SK-N-SH (cell line): ENCODE measurements at regions of chr3 and their contacts with region 1.

Region 1: GRCh38 chr3:196192036-196192523 is 19.1 kb downstream of the ZDHHC19 start:
- DNase-seq: peak; percentile 11
- H3K4me3 ChIP-seq: no peak overlapping the region
- H3K27ac ChIP-seq: no peak overlapping the region; a peak in 1 of 4 replicates
- H3K4me1 ChIP-seq: peaks cover 0 to 30% of the 10 kb centered on the region in 2 experiments; a peak in 1 of 4 replicates
- H3K27me3 ChIP-seq: no peaks in the 10 kb centered on the region
- CTCF ChIP-seq: no peak
- EP300 ChIP-seq: no peak
- RAD21 ChIP-seq: no peak

Region 2: GRCh38 chr3:194871143-194871863 is 1320.8 kb before region 1 on chr3:
- CTCF ChIA-PET with region 1: no interaction called
- POLR2A ChIA-PET with region 1: no interaction called
- DNase-seq: peak; percentile 82
- H3K4me3 ChIP-seq: no peak overlapping the region
- H3K27ac ChIP-seq: peak overlapping the region; percentile 74 to 77
- H3K4me1 ChIP-seq: peaks cover 27 to 32% of the 10 kb centered on the region in 2 experiments
- H3K27me3 ChIP-seq: no peaks in the 10 kb centered on the region
- CTCF ChIP-seq: no peak
- EP300 ChIP-seq: peak in 1 of 2 experiments; percentile 66; a peak in 1 of 4 replicates
- RAD21 ChIP-seq: peak; percentile 49

Region 3: GRCh38 chr3:196080982-196081790 is 110.9 kb before region 1 on chr3:
- CTCF ChIA-PET with region 1: interaction called, 258 read pairs
- POLR2A ChIA-PET with region 1: interaction called, 3 read pairs
- DNase-seq: peak; percentile 78
- H3K4me3 ChIP-seq: peak overlapping the region; percentile 86 to 99
- H3K27ac ChIP-seq: peak overlapping the region; percentile 78 to 86
- H3K4me1 ChIP-seq: peaks cover 0 to 7% of the 10 kb centered on the region in 2 experiments; a peak in 2 of 4 replicates
- H3K27me3 ChIP-seq: no peaks in the 10 kb centered on the region
- CTCF ChIP-seq: no peak
- EP300 ChIP-seq: no peak
- RAD21 ChIP-seq: no peak

Region 4: DNA sequence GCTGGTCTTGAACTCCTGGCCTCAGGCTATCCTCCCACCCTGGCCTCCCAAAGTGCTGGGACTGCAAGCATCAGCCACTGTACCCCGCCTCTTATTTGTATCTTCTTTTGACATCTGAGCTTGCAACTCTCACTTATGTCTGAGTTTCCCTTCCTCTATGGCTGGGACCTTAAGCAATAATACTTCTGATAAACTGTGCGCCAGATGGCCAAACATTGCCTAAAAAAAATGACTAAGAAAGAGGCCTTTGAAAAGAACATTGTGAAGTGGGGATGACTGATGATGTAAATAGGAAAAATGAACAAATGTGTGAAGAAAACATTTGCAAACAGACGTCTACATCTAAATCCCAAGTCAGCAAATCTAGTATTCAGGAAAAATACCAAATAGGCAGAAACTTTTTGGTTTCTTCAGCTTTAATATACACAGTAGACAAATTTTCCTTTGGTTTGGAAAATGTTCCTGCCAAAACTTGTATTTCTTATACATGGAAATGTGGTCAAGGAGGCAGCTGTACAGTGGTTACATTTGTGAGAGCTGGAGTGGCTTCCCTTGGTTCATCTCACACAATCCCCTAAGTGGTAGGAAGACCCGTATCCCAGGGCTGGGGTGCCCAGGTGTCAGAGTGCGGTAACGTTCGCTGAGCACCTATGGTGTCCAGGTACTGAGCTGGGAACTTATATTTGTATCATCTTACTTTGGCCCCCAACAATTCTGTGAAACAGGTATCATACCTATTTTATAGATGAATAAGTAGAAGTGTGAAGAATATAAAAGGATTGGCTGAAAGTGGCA is 98.6 kb before region 1 on chr3:
- CTCF ChIA-PET with region 1: interaction called, 12 read pairs
- POLR2A ChIA-PET with region 1: no interaction called
- DNase-seq: no peak
- H3K4me3 ChIP-seq: no peak overlapping the region
- H3K27ac ChIP-seq: no peak overlapping the region
- H3K4me1 ChIP-seq: no peaks in the 10 kb centered on the region
- H3K27me3 ChIP-seq: no peaks in the 10 kb centered on the region
- CTCF ChIP-seq: no peak
- EP300 ChIP-seq: no peak
- RAD21 ChIP-seq: no peak